Pancreas (tissue), 10 donors: ENCODE measurements at regions of chr6 and their contacts with region 1.

Region 1: DNA sequence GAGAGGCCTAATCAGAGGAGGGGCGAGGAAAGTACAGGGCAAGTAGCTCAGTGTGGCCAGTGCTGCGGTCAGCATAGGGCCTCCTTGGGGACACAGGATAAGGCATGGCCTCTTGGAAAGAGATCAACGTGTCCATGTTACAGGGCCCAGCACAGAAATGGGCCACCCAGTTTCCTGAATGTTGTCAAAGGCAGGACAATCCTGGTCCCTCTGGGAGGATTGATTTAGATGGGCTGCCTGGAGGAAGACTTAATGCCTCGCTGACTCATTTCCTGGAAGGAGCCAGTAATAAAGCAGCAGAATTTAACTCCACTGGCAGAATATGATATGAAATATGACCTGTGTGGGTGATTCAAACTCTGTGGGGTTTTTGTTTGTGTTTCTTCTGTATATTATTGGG is 16.6 kb downstream of the DDO start:
- DNase-seq: no peak
- ATAC-seq: no peak
- H3K4me3 ChIP-seq: no peak overlapping the region
- H3K27ac ChIP-seq: no peak overlapping the region
- H3K4me1 ChIP-seq: no peaks in the 10 kb centered on the region
- H3K27me3 ChIP-seq: no peaks in the 10 kb centered on the region
- CTCF ChIP-seq: no peak

Region 2: DNA sequence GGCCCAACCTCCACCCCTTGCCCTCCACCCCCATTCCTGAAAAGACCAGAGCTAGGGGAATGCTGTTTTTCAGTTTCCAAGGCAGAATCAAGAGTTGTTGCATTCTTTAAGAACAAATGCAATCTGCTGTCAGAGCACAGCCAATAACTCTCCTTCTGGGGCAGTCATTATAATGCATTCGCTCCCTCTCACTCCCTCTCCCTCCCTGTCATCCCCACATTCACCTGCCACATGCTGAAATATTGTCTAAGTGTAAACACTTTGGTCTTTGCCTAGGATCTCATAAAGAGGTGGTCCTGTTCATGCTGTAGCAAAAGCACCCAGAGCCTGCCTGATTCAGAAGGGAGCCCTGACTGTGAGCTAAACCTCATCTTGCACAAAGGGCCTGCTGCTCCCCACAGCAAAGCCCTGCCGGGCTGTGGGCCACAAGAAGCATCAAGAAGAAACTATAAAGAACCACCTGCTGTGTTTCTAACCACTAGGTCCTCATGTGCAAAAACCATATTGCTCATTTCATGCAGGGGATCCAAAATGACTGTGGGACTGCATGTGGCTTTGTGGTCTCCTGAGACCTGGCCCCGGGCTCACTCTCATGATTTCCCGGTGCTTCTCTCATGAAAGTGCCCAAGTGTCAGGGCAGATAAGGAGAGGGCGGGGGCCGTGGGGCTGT is 335.0 kb before region 1 on chr6:
- intact Hi-C with region 1: loop called in 1 of 3 experiments (anchors 10 kb)
- DNase-seq: no peak
- ATAC-seq: no peak
- H3K4me3 ChIP-seq: no peak overlapping the region
- H3K27ac ChIP-seq: no peak overlapping the region
- H3K4me1 ChIP-seq: no peaks in the 10 kb centered on the region
- H3K27me3 ChIP-seq: no peaks in the 10 kb centered on the region
- CTCF ChIP-seq: no peak

Region 3: GRCh38 chr6:110357664-110358552 is 40.9 kb before region 1 on chr6 and contains the start of gene METTL24:
- intact Hi-C with region 1: no loop called
- DNase-seq: peak; percentile 43 to 83 (median 53)
- ATAC-seq: peak; percentile 79 to 91 (median 82)
- H3K4me3 ChIP-seq: peak within 1 kb of the TSS; percentile 44 to 65 (median 52)
- H3K27ac ChIP-seq: peak within 1 kb of the TSS; percentile 57 to 85 (median 77)
- H3K4me1 ChIP-seq: peaks cover 0 to 4% (median 0%) of the 10 kb centered on the region in 3 donors
- H3K27me3 ChIP-seq: no peaks in the 10 kb centered on the region
- CTCF ChIP-seq: no peak
- total RNA-seq, gene METTL24: 1.0 to 4.4 (median 1.6) TPM